ENCODE measurements at regions of chr19 and their contacts with region 1.

Region 1: DNA sequence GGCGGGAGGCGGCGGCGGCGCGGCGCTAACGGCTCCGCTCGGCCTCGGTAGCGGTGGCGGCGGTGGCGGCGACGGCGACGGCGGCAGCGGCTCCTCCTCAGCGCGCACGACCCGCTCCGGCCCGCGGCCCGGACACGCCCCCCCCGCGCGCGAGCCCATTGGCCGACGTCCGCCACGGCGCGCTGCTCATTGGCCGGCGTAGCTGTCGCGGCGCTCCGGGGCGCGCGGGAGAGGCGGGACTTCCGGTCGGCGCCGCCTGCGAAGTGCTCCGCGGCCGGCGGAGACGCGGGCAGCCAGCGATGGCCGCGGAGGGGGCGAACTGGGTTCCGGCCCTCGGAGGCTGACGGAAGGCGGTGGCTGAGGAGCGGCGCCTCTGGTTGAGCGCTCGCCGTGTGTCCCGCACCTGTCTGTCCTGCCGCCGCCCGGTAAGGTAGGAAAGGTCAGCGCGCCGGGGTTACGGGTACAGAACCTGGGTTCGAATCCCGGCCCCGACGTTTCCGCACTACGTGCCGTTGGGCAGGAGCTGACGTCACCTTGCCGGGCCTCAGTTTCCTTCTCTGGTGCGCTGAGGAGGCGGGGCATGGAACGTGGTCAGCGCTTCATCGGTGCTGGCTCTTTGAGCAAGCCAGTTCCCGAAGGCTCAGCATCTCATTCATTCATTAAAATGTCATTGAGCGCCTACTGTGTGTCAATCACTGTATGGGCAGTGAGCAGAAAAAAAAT is at the start of gene ELAVL1:
- DNase-seq: no peak
- H3K4me3 ChIP-seq: peak within 1 kb of the TSS; percentile 71 to 77
- H3K27ac ChIP-seq: peak within 1 kb of the TSS; percentile 68
- H3K4me1 ChIP-seq: peaks cover 50% of the 10 kb centered on the region
- H3K27me3 ChIP-seq: no peaks in the 10 kb centered on the region
- CTCF ChIP-seq: no peak
- POLR2A ChIP-seq: peak in 1 of 2 donors; percentile 51
- total RNA-seq, gene ELAVL1: 40.5 TPM

Region 2: DNA sequence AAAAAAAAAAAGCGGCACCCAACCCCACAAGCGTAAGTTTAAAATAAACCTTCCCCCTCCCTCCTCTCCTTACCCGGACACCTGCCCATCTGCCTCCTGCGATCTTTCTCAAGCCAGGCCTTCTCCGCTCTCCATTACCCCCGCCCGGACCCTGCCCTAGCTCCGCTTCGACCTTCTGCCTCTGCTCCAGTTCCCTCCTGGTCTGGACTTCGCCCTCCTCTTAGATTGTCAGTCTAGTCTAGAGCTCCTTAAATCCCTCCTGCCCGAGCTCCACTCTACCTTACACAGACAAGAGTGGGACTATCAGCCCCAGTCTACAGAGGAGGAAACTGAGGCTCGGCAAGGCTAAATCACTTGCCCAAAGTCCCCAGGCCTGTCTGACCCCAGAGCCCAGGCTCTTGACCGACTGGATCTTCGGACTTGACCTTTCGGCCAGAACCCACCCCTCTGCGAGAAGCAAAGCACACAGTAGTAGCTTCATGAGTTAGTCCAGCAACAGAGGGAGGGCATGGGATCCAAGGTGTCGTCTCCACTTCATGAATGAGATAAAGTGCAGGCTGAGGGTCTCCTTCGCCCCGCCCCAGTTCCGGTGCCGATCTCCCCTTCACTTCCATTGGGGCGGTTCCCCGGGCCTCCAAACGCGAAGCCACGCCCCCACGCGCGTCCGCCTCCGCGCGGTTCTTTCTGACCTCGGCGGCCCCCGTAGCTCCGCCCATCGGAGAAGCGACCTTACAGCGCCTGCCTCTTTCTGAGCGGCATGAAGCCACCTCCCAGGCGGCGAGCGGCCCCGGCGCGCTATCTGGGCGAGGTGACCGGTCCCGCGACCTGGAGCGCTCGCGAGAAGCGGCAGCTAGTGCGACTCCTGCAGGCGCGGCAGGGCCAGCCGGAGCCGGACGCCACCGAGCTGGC is 85.8 kb before region 1 on chr19 and contains the start of gene SNAPC2:
- intact Hi-C with region 1: loop called (anchors 10 kb)
- DNase-seq: peak in 1 of 2 donors; percentile 97
- H3K4me3 ChIP-seq: peak within 1 kb of the TSS; percentile 61 to 78
- H3K27ac ChIP-seq: peak within 1 kb of the TSS; percentile 89
- H3K4me1 ChIP-seq: peaks cover 84% of the 10 kb centered on the region
- H3K27me3 ChIP-seq: no peaks in the 10 kb centered on the region
- CTCF ChIP-seq: no peak
- POLR2A ChIP-seq: peak in 1 of 2 donors; percentile 55
- total RNA-seq, gene SNAPC2: 17.4 TPM

Region 3: DNA sequence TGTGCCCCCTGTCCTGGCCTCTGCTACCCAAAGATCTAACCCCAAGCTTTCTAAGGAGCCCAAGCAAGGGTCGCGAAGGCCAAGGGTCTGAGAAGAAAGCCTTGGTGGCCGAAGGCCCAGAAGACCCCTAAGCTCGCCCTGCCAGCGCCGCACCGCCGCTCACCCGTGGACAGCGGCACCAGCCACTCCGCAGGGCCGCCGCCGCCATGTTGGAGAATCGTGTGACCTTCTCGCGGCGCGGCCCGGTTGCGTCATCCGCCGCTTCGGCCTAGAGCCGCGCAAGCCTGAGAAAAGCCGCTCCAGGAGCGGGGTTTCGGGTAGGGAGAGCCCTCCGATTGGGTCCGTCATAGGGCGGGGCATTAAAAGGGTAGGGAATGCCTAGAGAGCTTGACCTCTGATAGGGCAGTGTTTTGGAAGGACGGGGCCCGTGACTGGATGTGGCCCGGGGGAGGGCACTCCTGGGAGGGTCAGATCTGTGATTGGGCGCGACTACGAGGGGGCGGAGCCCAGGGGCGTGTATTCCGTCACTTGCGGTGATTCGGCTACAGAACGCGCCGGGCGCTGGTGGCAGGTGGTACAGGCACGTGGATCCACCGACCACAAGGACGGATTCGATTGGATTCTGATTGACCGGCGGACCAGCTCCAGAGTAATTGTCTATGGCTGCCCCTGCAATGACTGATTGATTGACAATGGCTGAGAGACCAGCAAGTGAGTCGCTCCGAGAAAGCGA is 62.1 kb before region 1 on chr19 and contains the start of gene TIMM44:
- intact Hi-C with region 1: loop called (anchors 10 kb)
- DNase-seq: peak; percentile 99 to 100
- H3K4me3 ChIP-seq: peak within 1 kb of the TSS; percentile 64 to 71
- H3K27ac ChIP-seq: peak within 1 kb of the TSS; percentile 95
- H3K4me1 ChIP-seq: peaks cover 35% of the 10 kb centered on the region
- H3K27me3 ChIP-seq: no peaks in the 10 kb centered on the region
- CTCF ChIP-seq: no peak
- POLR2A ChIP-seq: peak in 1 of 2 donors; percentile 59
- total RNA-seq, gene TIMM44: 76.1 TPM

Region 4: DNA sequence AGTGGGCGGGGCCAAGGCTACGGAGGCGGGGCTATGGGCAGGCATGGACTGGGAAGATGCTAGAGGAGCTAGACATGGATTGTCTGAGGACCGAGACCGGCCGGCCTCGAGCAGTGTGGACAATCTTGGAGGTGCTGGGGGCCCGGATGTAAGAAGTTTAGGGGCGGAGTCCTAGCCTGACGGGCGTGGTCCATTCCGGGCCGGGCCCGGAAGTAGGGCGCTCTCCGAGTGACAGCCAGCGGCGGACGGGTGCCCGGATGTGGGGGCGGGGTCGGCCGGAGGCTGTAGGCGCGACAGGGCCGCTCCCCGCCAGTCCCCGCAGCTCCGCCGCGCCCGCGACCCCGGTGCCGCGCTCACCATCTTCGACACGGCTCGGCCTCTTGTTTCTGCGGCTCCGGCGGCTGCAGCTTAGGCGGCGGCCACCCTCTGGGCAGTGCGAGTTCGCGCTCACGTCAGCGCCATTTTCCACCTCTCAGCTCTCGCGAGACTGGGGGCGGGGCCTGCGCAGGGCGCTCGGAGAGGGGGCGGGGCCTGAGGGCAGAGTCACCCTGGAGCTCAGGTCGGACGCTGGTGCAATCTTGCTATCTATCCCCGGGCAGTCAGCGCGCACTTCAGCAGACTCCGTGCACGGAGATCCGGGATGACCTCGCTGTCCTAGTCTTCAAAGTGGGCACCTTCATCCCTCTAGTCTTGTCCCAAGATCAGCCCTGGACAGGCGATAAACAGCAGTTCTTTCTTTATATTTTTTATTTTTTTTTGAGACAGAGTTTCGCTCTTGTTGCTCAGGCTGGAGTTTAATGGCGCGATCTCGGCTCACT is 508.2 kb after region 1 on chr19 and contains the start of gene ZNF414:
- intact Hi-C with region 1: loop called (anchors 10 kb)
- DNase-seq: peak in 1 of 2 donors; percentile 99
- H3K4me3 ChIP-seq: peak within 1 kb of the TSS; percentile 56 to 96
- H3K27ac ChIP-seq: peak within 1 kb of the TSS; percentile 95
- H3K4me1 ChIP-seq: peaks cover 39% of the 10 kb centered on the region
- H3K27me3 ChIP-seq: no peaks in the 10 kb centered on the region
- CTCF ChIP-seq: no peak
- POLR2A ChIP-seq: peak; percentile 45 to 71
- total RNA-seq, gene ZNF414: 27.5 TPM